Activated CD8-positive, alpha-beta T cell treated with anti-CD3 and anti-CD28 coated beads, Interleukin-2, amount 10 ng/mL, durations not matched to agents 7 days and 5 days (primary cell): ENCODE measurements at regions of chr12 and their contacts with region 1.

Region 1: DNA sequence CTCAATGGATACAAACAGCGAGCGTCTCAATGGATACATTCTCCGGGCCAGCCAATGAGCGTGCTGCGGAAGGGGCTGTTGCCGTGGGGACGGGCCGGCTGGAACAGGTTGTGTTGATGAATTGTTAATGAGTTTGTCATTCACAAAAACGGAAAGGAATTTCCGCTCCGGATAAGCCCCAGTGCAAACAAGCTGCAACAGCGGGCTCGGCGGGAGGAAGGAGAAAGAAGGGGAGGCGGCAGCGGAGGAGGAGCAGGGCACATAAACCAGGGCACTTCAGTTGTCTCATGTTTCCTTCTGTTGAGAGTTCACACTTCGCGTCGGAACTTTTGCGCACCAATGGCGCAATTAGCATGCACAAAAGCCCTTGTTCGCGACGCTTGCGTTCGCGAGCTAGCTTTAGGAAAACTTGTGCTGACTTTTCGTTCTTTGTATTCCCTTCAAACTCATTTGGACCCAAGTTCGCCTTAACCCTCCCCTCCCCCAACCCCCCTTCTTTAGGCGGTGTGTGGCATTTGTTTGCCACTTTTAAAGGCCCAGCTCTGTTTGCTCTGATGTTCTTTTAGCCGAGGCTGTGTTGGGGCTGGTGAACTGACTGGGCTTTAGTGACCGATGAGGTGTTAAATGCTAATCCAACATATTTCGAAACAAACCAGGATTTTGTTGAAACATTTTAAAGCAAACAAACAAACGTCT is at the start of gene DUSP6:
- DNase-seq: peak; percentile 97
- ATAC-seq: peak; percentile 79
- H3K4me3 Mint-ChIP-seq: peak within 1 kb of the TSS; percentile 98
- H3K27ac Mint-ChIP-seq: peak within 1 kb of the TSS; percentile 94
- H3K4me1 Mint-ChIP-seq: peaks cover 44% of the 10 kb centered on the region
- H3K27me3 Mint-ChIP-seq: no peaks in the 10 kb centered on the region
- total RNA-seq, gene DUSP6: 116 to 119 TPM

Region 2: DNA sequence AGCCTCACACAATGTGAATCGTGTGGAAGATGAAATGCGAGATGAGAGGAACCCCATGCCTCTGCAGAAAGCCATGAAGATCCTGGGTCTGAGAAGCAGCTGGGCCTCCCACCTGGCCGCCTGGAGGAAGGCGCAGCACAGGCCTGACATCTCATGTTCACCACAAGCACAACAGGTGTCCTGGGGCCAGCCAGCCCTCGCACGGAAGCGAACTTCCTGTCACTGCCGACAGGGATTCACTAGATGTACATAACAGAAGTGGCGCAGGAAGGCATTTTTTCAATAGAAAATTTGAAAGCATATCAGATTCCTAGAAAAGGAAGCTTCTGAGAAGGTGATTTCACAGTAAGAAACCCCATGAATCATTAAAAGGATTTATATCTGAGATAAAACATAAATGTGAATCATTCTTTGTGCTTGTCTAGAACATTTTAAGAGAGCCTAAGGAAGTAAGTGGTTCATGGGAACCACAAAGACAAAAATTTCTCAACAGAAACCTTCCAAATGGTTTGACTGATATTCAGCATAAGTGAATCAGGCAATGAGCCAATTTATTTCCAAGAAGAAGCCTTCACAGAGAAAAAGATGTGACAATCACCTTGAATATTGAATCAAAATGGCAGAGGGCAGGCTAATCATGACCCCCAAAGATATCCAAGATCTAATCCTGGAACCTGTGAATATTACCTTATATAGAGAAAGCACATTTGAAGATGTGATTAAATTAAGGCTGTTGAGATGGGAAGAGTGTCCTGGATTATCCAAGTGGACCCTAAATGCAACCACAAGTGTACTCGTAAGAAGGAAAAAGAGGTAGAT is 312.3 kb before region 1 on chr12:
- CTCF ChIA-PET with region 1: interaction called, 8 read pairs
- POLR2A ChIA-PET with region 1: interaction called, 51 read pairs
- DNase-seq: peak; percentile 93
- ATAC-seq: peak; percentile 98
- H3K4me3 Mint-ChIP-seq: peak overlapping the region; percentile 37
- H3K27ac Mint-ChIP-seq: peak overlapping the region; percentile 91
- H3K4me1 Mint-ChIP-seq: peaks cover 67% of the 10 kb centered on the region
- H3K27me3 Mint-ChIP-seq: no peaks in the 10 kb centered on the region

Region 3: DNA sequence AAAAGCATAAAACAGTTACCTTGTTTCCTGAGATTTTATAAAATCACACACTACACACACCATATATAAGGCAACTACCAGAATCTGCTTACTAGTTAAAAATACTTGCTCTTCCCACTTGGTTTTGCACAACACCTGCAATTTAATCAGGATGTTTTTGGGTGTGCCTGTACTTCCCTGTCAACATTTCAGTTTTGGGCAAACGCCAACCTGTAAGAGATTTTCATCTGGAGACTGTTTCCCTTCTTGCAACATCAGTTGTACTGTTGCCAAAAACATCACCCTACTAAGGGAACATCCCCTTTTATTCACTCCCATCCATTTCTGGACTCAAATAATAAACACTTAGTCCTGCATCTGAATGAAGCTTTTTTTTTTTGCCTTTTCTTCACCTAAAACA is 172.7 kb before region 1 on chr12:
- CTCF ChIA-PET with region 1: no interaction called
- POLR2A ChIA-PET with region 1: interaction called, 16 read pairs
- DNase-seq: no peak
- ATAC-seq: no peak
- H3K4me3 Mint-ChIP-seq: no peak overlapping the region
- H3K27ac Mint-ChIP-seq: peak overlapping the region; percentile 31
- H3K4me1 Mint-ChIP-seq: peaks cover 24% of the 10 kb centered on the region
- H3K27me3 Mint-ChIP-seq: no peaks in the 10 kb centered on the region

Region 4: DNA sequence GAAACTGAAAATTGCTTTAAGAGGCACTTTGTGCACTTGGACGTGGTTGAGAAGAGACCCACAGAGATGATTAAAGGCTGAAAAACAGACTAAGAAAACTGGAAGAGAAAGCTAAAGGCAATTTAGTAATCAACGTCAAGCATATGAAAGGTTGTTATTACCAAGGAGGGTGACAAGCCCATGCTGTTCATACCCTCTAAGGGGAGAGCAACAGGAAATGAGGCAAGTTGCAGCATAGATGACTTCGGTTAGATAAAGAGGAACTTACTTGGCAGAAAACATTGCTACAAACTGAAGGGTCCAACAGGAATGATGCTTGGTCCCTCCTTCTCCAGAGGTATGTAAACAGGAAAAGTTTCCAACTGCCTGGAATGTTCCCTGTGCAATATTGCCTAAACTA is 108.1 kb before region 1 on chr12:
- CTCF ChIA-PET with region 1: interaction called, 37 read pairs
- POLR2A ChIA-PET with region 1: interaction called, 83 read pairs
- DNase-seq: peak; percentile 65
- ATAC-seq: peak; percentile 74
- H3K4me3 Mint-ChIP-seq: peak overlapping the region; percentile 66
- H3K27ac Mint-ChIP-seq: peak overlapping the region; percentile 86
- H3K4me1 Mint-ChIP-seq: peaks cover 71% of the 10 kb centered on the region
- H3K27me3 Mint-ChIP-seq: no peaks in the 10 kb centered on the region

Region 5: GRCh38 chr12:89451841-89452251 is 99.2 kb after region 1 on chr12:
- CTCF ChIA-PET with region 1: interaction called, 4 read pairs
- POLR2A ChIA-PET with region 1: interaction called, 11 read pairs
- DNase-seq: no peak
- ATAC-seq: no peak
- H3K4me3 Mint-ChIP-seq: no peak overlapping the region
- H3K27ac Mint-ChIP-seq: no peak overlapping the region
- H3K4me1 Mint-ChIP-seq: peaks cover 34% of the 10 kb centered on the region
- H3K27me3 Mint-ChIP-seq: no peaks in the 10 kb centered on the region

Region 6: DNA sequence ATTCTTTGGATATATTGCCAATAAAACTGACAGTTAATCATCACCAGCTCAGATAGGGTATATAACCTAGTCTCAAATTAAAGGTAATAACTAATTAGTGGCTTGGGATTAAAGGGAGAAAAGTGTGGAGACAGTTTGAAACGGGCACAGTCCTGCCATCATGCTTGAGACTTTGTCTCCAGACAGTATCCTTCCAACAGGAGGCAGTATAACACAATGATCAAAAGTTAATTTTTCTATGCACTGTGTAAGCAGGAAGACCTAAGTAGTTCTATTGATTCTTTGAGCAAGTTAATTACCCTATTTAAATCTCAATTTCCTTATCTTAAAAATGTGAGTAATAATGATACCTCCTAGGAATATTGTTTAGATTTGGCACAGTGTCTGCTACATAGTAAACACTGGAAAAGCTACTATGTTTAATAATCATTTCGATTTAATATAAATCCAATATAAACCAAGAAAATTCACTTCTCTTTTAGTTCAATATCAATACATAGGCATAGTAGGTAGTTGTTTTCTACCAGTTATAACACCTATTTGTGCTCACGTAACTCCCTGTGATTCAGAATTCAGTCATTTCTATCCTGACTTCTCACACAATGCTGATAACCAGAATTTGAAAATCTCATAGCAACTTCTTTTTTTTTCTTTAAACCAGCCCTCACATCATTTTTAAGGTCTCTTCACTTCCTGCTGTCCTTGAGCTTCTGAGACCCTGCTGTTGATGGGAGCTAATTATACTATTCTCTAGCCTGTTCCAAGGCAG is 118.3 kb after region 1 on chr12:
- CTCF ChIA-PET with region 1: interaction called, 16 read pairs
- POLR2A ChIA-PET with region 1: interaction called, 49 read pairs
- DNase-seq: no peak
- ATAC-seq: peak; percentile 45
- H3K4me3 Mint-ChIP-seq: peak overlapping the region; percentile 26
- H3K27ac Mint-ChIP-seq: peak overlapping the region; percentile 78
- H3K4me1 Mint-ChIP-seq: peaks cover 77% of the 10 kb centered on the region
- H3K27me3 Mint-ChIP-seq: no peaks in the 10 kb centered on the region